ENCODE measurements at regions of chr1 and their contacts with region 1.

Region 1: GRCh38 chr1:43073490-43074230 is 98.4 kb downstream of the EBNA1BP2 start:
- DNase-seq: peak; percentile 79
- ATAC-seq: peak; percentile 73
- H3K4me3 Mint-ChIP-seq: no peak overlapping the region
- H3K27ac Mint-ChIP-seq: peak overlapping the region; percentile 92; the same call in 1 of the 2 replicates
- H3K4me1 Mint-ChIP-seq: peaks cover 50% of the 10 kb centered on the region
- H3K27me3 Mint-ChIP-seq: peaks cover 4% of the 10 kb centered on the region
- CTCF ChIP-seq: peak; percentile 96

Region 2: GRCh38 chr1:42833981-42834380 is 239.7 kb before region 1 on chr1:
- CTCF ChIA-PET with region 1: interaction called, 10 read pairs
- POLR2A ChIA-PET with region 1: no interaction called
- DNase-seq: no peak
- ATAC-seq: no peak
- H3K4me3 Mint-ChIP-seq: no peak overlapping the region
- H3K27ac Mint-ChIP-seq: no peak overlapping the region
- H3K4me1 Mint-ChIP-seq: peaks cover 3% of the 10 kb centered on the region; the same call in 1 of the 2 replicates
- H3K27me3 Mint-ChIP-seq: no peaks in the 10 kb centered on the region
- CTCF ChIP-seq: no peak

Region 3: DNA sequence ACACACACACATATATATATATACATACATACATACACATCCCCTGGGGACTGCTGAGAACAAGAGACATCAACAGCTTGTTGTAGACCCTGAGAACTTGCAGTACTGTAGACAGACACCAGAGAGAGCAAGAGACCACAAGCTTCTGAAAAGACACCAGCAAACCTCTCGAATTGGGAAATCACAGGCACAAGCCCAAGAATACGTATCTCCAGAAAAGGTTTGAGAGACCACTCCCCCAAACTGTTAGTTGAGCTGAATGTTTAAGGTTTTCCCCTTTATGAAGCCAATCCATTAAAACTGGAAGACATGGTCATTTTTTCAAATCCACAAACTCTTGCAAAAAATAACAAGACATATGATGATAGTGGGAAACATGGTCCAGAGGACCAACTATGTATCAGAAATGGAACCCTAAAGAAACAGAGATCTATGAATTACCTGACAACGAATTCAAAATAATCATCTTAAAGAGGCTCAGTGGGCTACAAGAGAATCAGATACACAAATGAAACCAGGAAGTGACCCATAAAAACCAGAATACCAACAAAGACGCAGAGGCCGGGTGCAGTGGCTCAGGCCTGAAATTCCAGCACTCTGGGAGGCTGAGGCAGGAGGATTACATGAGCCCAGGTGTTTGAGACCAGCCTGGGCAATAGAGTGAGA is 160.1 kb before region 1 on chr1:
- CTCF ChIA-PET with region 1: interaction called, 409 read pairs
- POLR2A ChIA-PET with region 1: interaction called, 9 read pairs
- DNase-seq: peak; percentile 53
- ATAC-seq: peak; percentile 94
- H3K4me3 Mint-ChIP-seq: no peak overlapping the region
- H3K27ac Mint-ChIP-seq: no peak overlapping the region
- H3K4me1 Mint-ChIP-seq: no peaks in the 10 kb centered on the region; the same call in 1 of the 2 replicates
- H3K27me3 Mint-ChIP-seq: peaks cover 7% of the 10 kb centered on the region
- CTCF ChIP-seq: peak; percentile 72

Region 4: DNA sequence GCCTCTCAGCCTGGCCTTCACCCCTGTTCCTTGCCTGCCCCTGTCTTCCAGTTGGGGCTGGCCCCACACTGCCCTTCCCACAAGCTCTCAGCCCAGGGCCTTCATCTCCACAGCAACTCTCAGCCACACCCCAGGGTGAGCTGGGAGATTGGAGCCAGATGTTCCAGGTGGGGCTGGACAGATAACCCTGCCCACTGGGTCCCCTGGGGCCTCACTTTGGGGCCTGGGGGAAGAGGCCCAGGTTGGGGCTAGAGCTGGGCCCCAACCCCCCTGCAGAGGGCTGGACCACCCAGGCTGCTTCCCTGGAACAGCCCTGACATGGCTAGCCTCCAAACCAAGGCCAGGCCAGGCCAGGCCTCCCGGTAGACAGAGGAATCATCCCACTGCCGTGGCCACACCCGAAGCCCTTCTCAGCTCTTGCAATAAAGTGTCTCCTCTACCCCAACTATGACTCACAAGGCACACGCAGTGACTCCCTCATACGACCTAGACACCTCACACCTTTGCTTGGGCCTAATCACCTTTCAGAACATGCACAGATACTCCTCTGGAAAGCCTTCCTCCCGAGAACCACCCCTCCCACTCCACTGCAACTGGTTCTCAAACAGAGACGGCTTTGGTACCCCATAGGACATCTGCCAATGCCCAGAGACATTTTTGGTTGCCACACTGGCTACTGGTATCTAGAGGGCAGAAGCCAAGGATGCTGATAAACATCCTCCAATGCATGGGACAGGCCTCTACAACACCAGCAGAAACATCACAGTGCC is 137.2 kb before region 1 on chr1:
- CTCF ChIA-PET with region 1: interaction called, 33 read pairs
- POLR2A ChIA-PET with region 1: interaction called, 4 read pairs
- DNase-seq: no peak
- ATAC-seq: no peak; the same call in 1 of the 2 replicates
- H3K4me3 Mint-ChIP-seq: no peak overlapping the region
- H3K27ac Mint-ChIP-seq: peak overlapping the region; percentile 95
- H3K4me1 Mint-ChIP-seq: peaks cover 88% of the 10 kb centered on the region
- H3K27me3 Mint-ChIP-seq: no peaks in the 10 kb centered on the region
- CTCF ChIP-seq: no peak

Region 5: GRCh38 chr1:42958488-42959319 is 115.0 kb before region 1 on chr1 and contains the start of gene SLC2A1:
- CTCF ChIA-PET with region 1: interaction called, 30 read pairs
- POLR2A ChIA-PET with region 1: interaction called, 17 read pairs
- DNase-seq: peak; percentile 96
- ATAC-seq: peak; percentile 84
- H3K4me3 Mint-ChIP-seq: peak within 1 kb of the TSS; percentile 99
- H3K27ac Mint-ChIP-seq: peak within 1 kb of the TSS; percentile 94
- H3K4me1 Mint-ChIP-seq: peaks cover 68% of the 10 kb centered on the region
- H3K27me3 Mint-ChIP-seq: no peaks in the 10 kb centered on the region; the same call in 1 of the 2 replicates
- CTCF ChIP-seq: no peak
- total RNA-seq, gene SLC2A1: 215 to 415 TPM (median 396 TPM) in 3 replicates

Region 6: GRCh38 chr1:43143441-43143888 is 69.8 kb after region 1 on chr1:
- CTCF ChIA-PET with region 1: interaction called, 13 read pairs
- POLR2A ChIA-PET with region 1: no interaction called
- DNase-seq: peak; percentile 66
- ATAC-seq: peak; percentile 10; the same call in 1 of the 2 replicates
- H3K4me3 Mint-ChIP-seq: peak overlapping the region; percentile 17; the same call in 1 of the 2 replicates
- H3K27ac Mint-ChIP-seq: no peak overlapping the region
- H3K4me1 Mint-ChIP-seq: peaks cover 17% of the 10 kb centered on the region
- H3K27me3 Mint-ChIP-seq: peaks cover under 1% of the 10 kb centered on the region; the same call in 1 of the 2 replicates
- CTCF ChIP-seq: peak; percentile 89

Region 7: DNA sequence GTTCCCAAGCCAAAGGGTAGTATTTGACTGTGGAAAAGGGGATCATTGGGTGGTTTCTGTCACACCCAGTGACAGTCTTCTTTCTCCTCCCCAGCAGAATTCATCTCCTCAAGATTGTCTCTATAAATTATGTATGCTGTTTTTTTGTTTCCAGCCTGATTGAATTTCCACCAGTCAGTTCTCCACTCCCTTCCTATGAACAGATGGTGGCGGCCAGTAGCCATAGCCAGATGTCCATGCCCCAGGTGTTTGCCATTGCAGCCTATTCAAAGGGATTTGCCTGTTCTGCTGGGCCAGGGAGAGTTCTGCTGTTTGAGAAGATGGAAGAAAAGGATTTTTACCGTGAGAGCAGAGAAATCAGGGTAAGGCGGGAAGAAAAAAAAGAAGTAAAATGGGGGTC is 111.3 kb after region 1 on chr1:
- CTCF ChIA-PET with region 1: no interaction called
- POLR2A ChIA-PET with region 1: no interaction called
- DNase-seq: no peak
- ATAC-seq: no peak
- H3K4me3 Mint-ChIP-seq: no peak overlapping the region
- H3K27ac Mint-ChIP-seq: no peak overlapping the region
- H3K4me1 Mint-ChIP-seq: no peaks in the 10 kb centered on the region
- H3K27me3 Mint-ChIP-seq: no peaks in the 10 kb centered on the region; the same call in 1 of the 2 replicates
- CTCF ChIP-seq: no peak